ENCODE measurements at regions of chr2 and their contacts with region 1.

Region 1: GRCh38 chr2:85602476-85603234 is at the start of gene TMEM150A:
- DNase-seq: peak; percentile 93
- ATAC-seq: peak; percentile 97
- H3K4me3 ChIP-seq: peak within 1 kb of the TSS; percentile 72 to 92 (median 86)
- H3K4me3 Mint-ChIP-seq: peak within 1 kb of the TSS; percentile 95
- H3K27ac ChIP-seq: peak within 1 kb of the TSS; percentile 20 to 74
- H3K27ac Mint-ChIP-seq: peak within 1 kb of the TSS; percentile 89
- H3K4me1 ChIP-seq: peaks cover 17 to 23% of the 10 kb centered on the region in 2 donors
- H3K4me1 Mint-ChIP-seq: peaks cover 30% of the 10 kb centered on the region
- H3K27me3 ChIP-seq: no peaks in the 10 kb centered on the region
- H3K27me3 Mint-ChIP-seq: no peaks in the 10 kb centered on the region
- CTCF ChIP-seq: no peak
- total RNA-seq, gene TMEM150A: 23.0 and 23.1 TPM in 2 replicates

Region 2: DNA sequence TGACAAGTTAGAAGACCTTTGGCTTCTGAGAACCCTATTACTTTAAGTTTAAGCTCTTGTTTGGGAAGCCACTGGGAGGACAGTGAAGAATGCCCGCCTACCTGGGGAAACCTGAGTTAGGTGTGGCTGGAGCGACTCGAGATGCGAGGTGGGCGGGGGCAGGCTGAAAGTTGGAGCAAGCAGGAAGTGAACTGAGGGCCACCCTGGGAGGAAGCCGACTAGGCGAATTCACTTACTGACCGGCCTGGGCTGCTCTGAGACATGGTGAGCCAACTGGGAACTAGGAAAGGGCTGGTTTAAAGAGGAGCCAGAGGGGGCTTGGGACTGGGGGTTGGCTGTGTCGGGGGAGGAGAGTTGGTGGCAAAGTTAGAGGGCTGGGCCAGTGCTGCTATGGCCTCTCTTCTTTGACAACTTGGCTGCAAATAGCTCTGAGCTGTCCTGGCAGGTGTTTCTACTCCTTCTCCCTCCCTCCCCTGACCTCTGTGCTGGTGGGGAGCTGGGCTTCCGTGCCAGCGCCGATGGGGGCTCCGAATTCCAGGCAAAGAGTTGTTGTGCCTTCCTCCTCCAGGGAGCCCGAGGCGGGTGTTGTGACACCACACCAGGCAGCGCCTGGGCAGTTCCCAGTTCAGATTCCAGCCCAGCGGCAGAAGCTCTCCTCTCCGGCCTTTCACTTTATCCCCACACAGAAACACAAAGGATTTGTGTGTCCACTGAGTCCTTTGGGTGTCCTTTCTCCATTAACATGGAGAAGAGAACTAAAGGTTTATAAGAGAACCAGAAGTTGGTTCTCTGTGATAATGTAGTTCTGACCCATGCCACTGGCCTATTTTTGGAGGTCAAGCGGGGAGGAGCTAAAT is 25.0 kb before region 1 on chr2 and contains the start of gene VAMP8:
- CTCF ChIA-PET with region 1: no interaction called
- POLR2A ChIA-PET with region 1: interaction called, 3 read pairs
- intact Hi-C with region 1: loop called (anchors 1 kb)
- DNase-seq: peak; percentile 68
- ATAC-seq: peak; percentile 67
- H3K4me3 ChIP-seq: peak within 1 kb of the TSS; percentile 50 to 97 (median 70)
- H3K4me3 Mint-ChIP-seq: peak within 1 kb of the TSS; percentile 93
- H3K27ac ChIP-seq: peak within 1 kb of the TSS; percentile 70 to 87
- H3K27ac Mint-ChIP-seq: peak within 1 kb of the TSS; percentile 96
- H3K4me1 ChIP-seq: peaks cover 20 to 36% of the 10 kb centered on the region in 2 donors
- H3K4me1 Mint-ChIP-seq: peaks cover 37% of the 10 kb centered on the region
- H3K27me3 ChIP-seq: no peaks in the 10 kb centered on the region
- H3K27me3 Mint-ChIP-seq: no peaks in the 10 kb centered on the region
- CTCF ChIP-seq: no peak
- total RNA-seq, gene VAMP8: 73.1 and 73.8 TPM in 2 replicates

Region 3: GRCh38 chr2:85669549-85669948 is 66.9 kb after region 1 on chr2:
- CTCF ChIA-PET with region 1: no interaction called
- POLR2A ChIA-PET with region 1: no interaction called
- intact Hi-C with region 1: no loop called
- DNase-seq: no peak
- ATAC-seq: peak; percentile 36
- H3K4me3 ChIP-seq: no peak overlapping the region
- H3K4me3 Mint-ChIP-seq: peak overlapping the region; percentile 21
- H3K27ac ChIP-seq: no peak overlapping the region
- H3K27ac Mint-ChIP-seq: no peak overlapping the region
- H3K4me1 ChIP-seq: peaks cover 5 to 6% of the 10 kb centered on the region in 2 donors
- H3K4me1 Mint-ChIP-seq: peaks cover 13% of the 10 kb centered on the region
- H3K27me3 ChIP-seq: peaks cover 0 to 2% (median 0%) of the 10 kb centered on the region in 4 experiments
- H3K27me3 Mint-ChIP-seq: no peaks in the 10 kb centered on the region
- CTCF ChIP-seq: no peak

Region 4: GRCh38 chr2:85750587-85751575 is 148.2 kb after region 1 on chr2:
- CTCF ChIA-PET with region 1: no interaction called
- POLR2A ChIA-PET with region 1: no interaction called
- intact Hi-C with region 1: no loop called
- DNase-seq: peak; percentile 67
- ATAC-seq: peak; percentile 29
- H3K4me3 ChIP-seq: no peak overlapping the region
- H3K4me3 Mint-ChIP-seq: peak overlapping the region; percentile 54
- H3K27ac ChIP-seq: no peak overlapping the region
- H3K27ac Mint-ChIP-seq: no peak overlapping the region
- H3K4me1 ChIP-seq: peaks cover 60 to 64% of the 10 kb centered on the region in 2 donors
- H3K4me1 Mint-ChIP-seq: peaks cover 59% of the 10 kb centered on the region
- H3K27me3 ChIP-seq: peaks cover 0 to 49% (median 21%) of the 10 kb centered on the region in 4 experiments
- H3K27me3 Mint-ChIP-seq: peaks cover 23% of the 10 kb centered on the region
- CTCF ChIP-seq: peak; percentile 70

Measured in B cell (primary cell).